Psoas muscle (tissue), 8 donors: ENCODE measurements at regions of chr10 and their contacts with region 1.

Region 1: DNA sequence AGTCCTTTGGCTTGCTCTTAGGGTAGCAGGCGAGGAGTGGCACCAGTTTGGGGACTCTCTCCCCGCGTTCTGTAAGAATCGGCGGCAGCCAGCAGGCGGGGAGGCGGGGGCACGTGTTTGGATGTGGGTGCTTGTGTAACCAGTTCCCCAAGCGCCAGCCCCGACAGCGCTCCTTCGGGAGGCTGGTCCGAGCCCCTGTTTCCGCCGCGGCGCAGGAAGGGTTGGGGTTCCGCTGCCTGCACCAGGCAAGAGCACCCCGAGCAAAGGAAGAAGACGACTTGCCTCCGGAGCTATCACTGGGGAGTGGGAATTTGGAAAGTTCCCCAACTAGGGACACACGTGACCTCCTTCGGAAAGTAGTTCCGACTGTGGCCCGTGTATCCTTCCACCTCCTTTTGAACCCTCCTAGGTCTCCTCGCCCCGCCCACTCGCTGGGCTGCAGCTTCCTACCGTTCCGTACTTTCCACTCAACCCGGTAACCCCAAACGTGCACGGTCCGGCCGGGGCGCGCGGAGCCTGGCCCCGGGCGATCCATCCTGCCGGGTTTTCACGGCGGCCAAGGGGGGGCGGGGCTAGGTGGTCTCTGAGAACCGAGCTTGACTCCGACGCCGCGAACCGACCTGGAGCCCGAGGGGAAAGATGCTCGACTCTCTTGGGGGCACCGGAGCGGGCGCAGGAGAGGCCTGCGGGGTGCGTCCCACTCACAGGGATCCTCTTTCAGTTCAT is 1.2 kb downstream of the KLLN start:
- DNase-seq: peak; percentile 97 to 98
- ATAC-seq: peak; percentile 84 to 90 (median 86)
- H3K4me3 ChIP-seq: peak overlapping the region; percentile 77
- H3K27ac ChIP-seq: peak overlapping the region; percentile 94
- H3K4me1 ChIP-seq: no peaks in the 10 kb centered on the region
- H3K27me3 ChIP-seq: no peaks in the 10 kb centered on the region
- CTCF ChIP-seq: no peak

Region 2: GRCh38 chr10:87913156-87913921 is 51.2 kb after region 1 on chr10:
- intact Hi-C with region 1: no loop called
- DNase-seq: no peak
- ATAC-seq: no peak
- H3K4me3 ChIP-seq: no peak overlapping the region
- H3K27ac ChIP-seq: no peak overlapping the region
- H3K4me1 ChIP-seq: peaks cover 32% of the 10 kb centered on the region
- H3K27me3 ChIP-seq: no peaks in the 10 kb centered on the region
- CTCF ChIP-seq: no peak

Region 3: DNA sequence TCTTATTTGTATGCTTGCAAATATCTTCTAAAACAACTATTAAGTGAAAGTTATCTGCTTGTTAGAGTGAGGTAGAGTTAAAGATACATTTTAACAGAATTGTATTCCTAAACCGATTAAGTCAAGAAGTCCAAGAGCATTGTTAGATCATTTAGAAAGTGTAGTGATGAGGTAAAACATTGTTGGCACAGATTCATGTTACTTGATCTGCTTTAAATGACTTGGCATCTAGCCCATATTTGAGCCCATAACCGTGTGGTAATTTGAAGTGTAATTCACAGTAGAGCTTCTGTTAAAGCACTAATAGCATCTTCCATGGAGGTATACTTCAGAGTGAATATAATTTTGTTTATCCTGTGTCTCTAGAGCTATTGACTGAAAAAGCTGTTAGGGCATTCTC is 63.5 kb after region 1 on chr10:
- intact Hi-C with region 1: loop called in 1 of 2 experiments (anchors 5 kb)
- DNase-seq: no peak
- ATAC-seq: peak in 1 of 4 donors; percentile 21
- H3K4me3 ChIP-seq: no peak overlapping the region
- H3K27ac ChIP-seq: no peak overlapping the region
- H3K4me1 ChIP-seq: peaks cover 51% of the 10 kb centered on the region
- H3K27me3 ChIP-seq: no peaks in the 10 kb centered on the region
- CTCF ChIP-seq: no peak

Region 4: DNA sequence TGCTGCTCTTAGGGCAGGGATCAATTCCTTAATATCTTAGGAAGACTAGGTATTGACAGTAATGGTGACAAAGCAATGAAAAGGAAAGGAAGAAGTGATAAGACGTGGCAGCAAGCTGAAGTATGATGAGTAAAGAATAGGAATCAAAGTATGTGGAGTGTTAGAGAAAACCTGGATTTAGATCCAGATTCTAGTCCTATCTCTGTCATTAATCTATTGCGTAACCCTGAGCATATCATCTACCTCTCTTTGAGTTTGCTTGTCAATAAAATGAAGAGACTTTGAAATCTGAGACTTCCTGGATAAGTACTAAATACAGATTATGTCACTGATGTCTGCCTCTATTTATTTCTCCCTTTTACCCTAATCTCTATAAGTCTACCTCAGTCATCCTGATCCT is 90.5 kb after region 1 on chr10:
- intact Hi-C with region 1: loop called in 1 of 2 experiments (anchors 5 kb)
- DNase-seq: no peak
- ATAC-seq: no peak
- H3K4me3 ChIP-seq: no peak overlapping the region
- H3K27ac ChIP-seq: no peak overlapping the region
- H3K4me1 ChIP-seq: peaks cover 7% of the 10 kb centered on the region
- H3K27me3 ChIP-seq: no peaks in the 10 kb centered on the region
- CTCF ChIP-seq: no peak

Region 5: GRCh38 chr10:88114368-88114767 is 252.3 kb after region 1 on chr10:
- intact Hi-C with region 1: loop called in 1 of 2 experiments (anchors 5 kb)
- DNase-seq: peak; percentile 31 to 58
- ATAC-seq: peak; percentile 57 to 88 (median 72)
- H3K4me3 ChIP-seq: no peak overlapping the region
- H3K27ac ChIP-seq: no peak overlapping the region
- H3K4me1 ChIP-seq: peaks cover 4% of the 10 kb centered on the region
- H3K27me3 ChIP-seq: no peaks in the 10 kb centered on the region
- CTCF ChIP-seq: peak; percentile 63

Region 6: DNA sequence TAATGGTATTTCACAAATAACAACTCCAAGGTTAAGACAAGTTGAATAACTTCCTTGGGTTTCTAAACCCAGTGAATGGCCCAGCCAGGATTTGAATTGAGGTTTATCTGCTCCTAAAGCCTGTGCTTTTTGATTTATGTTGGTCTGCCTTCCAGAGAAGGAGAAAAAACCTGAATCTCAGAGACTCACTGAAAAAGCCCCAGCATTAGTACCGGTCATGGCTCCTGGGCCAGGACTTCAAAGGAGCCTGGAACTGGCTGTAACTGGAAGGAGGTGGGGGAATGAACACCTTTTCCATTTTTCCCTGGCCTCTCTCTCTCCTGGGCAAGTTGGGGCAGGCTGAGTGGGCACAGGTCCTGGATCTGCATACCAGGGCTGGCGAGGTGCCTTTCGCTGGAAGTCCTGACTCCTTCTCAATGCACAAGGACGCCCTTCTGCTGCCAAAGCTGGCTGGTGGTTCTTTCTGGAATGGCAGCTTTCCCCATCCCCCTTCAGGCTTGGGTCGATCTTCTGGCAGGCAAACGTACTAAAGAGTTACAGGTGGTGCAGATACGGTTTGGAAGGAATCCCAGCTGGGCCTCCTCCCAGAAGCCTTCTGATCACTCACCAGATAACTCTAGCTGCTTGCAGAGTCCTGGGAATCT is 269.5 kb after region 1 on chr10:
- intact Hi-C with region 1: loop called in 1 of 2 experiments (anchors 5 kb)
- DNase-seq: peak; percentile 42 to 83
- ATAC-seq: peak; percentile 81 to 95 (median 88)
- H3K4me3 ChIP-seq: peak overlapping the region; percentile 57
- H3K27ac ChIP-seq: peak overlapping the region; percentile 80
- H3K4me1 ChIP-seq: peaks cover 23% of the 10 kb centered on the region
- H3K27me3 ChIP-seq: no peaks in the 10 kb centered on the region
- CTCF ChIP-seq: peak; percentile 33

Region 7: DNA sequence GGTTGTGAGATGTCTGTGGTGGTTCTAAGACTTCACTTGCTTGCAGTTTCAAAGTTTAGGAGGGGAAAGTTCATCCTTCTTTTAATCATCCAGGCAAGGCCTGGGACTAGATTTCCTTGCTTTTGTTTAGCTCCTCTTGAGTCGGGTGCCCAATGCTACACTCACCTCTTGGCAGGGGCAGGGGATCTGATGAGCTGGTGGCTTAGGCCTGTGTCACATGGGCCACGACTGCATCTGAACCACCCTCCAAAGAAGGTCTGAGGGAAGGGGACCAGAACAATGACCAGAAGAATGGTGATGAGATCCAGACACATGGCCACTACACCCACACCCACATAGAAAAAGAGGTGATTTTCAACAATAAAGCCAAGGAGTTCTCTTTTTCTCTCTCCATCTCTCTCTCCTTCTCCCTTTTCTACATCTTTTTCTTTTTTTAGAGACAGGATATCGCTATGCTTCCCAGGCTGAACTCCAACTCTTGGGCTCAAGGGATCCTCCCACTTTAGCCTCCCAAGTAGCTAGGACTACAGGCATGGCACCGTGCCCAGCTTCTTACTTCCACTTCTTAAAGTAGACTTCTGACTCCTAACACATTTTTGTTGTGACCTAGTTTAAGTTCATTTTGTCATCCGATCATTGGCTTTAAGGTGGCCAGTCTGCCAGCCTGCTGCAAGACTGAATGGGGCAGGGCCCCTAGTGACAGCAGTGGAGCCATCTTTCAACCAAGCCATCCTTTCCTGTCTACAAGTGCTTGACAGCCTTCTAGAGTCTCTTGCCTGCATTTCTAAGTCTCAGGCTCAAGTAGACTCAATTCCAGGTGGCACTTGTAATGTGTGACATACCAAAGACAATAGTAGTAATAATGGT is 370.1 kb after region 1 on chr10:
- intact Hi-C with region 1: no loop called
- DNase-seq: peak; percentile 79 to 91
- ATAC-seq: peak; percentile 57 to 74 (median 70)
- H3K4me3 ChIP-seq: no peak overlapping the region
- H3K27ac ChIP-seq: peak overlapping the region; percentile 34
- H3K4me1 ChIP-seq: peaks cover 19% of the 10 kb centered on the region
- H3K27me3 ChIP-seq: no peaks in the 10 kb centered on the region
- CTCF ChIP-seq: no peak

Region 8: GRCh38 chr10:88243836-88244730 is 382.0 kb after region 1 on chr10:
- intact Hi-C with region 1: loop called (anchors 5 to 10 kb)
- DNase-seq: peak; percentile 57 to 90
- ATAC-seq: peak; percentile 92 to 93 (median 92)
- H3K4me3 ChIP-seq: peak overlapping the region; percentile 52
- H3K27ac ChIP-seq: peak overlapping the region; percentile 82
- H3K4me1 ChIP-seq: peaks cover 54% of the 10 kb centered on the region
- H3K27me3 ChIP-seq: no peaks in the 10 kb centered on the region
- CTCF ChIP-seq: no peak

Region 9: GRCh38 chr10:88386821-88387773 is 525.0 kb after region 1 on chr10:
- intact Hi-C with region 1: loop called (anchors 5 kb)
- DNase-seq: no peak
- ATAC-seq: peak; percentile 60 to 87 (median 77)
- H3K4me3 ChIP-seq: peak overlapping the region; percentile 4
- H3K27ac ChIP-seq: peak overlapping the region; percentile 6
- H3K4me1 ChIP-seq: peaks cover 18% of the 10 kb centered on the region
- H3K27me3 ChIP-seq: no peaks in the 10 kb centered on the region
- CTCF ChIP-seq: no peak